Activated B cell treated with CpG ODN at 0.5 μM for 24 hours (primary cell): ENCODE measurements at regions of chr1 and their contacts with region 1.

Region 1: GRCh38 chr1:201170533-201171062 is 16.3 kb upstream of the TMEM9 start:
- DNase-seq: peak; percentile 63
- ATAC-seq: peak; percentile 99
- H3K4me3 Mint-ChIP-seq: peak overlapping the region; percentile 88
- H3K27ac Mint-ChIP-seq: peak overlapping the region; percentile 79
- H3K4me1 Mint-ChIP-seq: peaks cover 12% of the 10 kb centered on the region
- H3K27me3 Mint-ChIP-seq: peaks cover 4% of the 10 kb centered on the region
- CTCF ChIP-seq: no peak

Region 2: DNA sequence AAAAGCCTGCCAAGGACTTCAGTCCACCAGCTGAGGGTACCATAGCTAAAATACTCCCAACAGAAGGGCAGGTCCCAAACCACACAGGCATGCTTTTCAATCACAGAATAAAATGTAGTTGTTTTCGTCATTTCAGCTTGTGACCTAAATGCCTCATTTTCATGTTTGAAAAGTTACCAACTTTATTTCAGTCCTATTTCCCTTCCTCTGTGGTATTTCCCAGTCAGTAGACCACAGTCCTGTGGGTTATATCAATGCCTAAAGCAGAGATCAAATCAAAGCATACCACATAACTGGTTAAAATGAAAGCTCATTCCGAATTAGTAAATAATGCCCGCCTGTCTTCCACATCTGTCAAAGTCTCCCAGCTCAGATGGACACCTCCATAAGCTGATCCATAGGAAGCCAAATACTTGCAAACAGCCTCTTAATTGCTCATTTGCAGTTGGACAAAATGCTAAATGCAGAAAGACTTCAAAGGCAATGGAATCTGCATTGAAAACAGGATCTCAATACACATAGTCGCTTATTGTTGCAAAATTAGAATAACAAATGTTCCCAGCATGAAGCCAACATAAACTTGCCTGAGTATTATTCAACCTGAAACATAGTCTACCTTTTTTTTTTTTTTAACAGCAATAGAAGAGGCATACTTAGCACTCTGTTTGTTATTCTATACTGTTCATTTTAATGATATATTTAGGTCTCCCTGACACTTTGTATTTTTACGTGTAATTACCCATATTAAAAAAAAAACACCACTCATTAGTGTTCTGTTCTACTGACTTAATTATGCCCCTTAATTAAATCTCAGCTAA is 1089.2 kb before region 1 on chr1:
- CTCF ChIA-PET with region 1: no interaction called
- POLR2A ChIA-PET with region 1: no interaction called
- intact Hi-C with region 1: no loop called
- DNase-seq: no peak
- ATAC-seq: no peak
- H3K4me3 Mint-ChIP-seq: no peak overlapping the region
- H3K27ac Mint-ChIP-seq: no peak overlapping the region
- H3K4me1 Mint-ChIP-seq: no peaks in the 10 kb centered on the region
- H3K27me3 Mint-ChIP-seq: peaks cover 17% of the 10 kb centered on the region
- CTCF ChIP-seq: no peak

Region 3: GRCh38 chr1:201154389-201155165 is 16.0 kb before region 1 on chr1 and contains the start of gene TMEM9:
- CTCF ChIA-PET with region 1: interaction called, 4 read pairs
- POLR2A ChIA-PET with region 1: interaction called, 15 read pairs
- intact Hi-C with region 1: loop called (anchors 1 kb)
- DNase-seq: peak; percentile 98
- ATAC-seq: peak; percentile 98
- H3K4me3 Mint-ChIP-seq: peak within 1 kb of the TSS; percentile 92
- H3K27ac Mint-ChIP-seq: peak within 1 kb of the TSS; percentile 89
- H3K4me1 Mint-ChIP-seq: peaks cover 16% of the 10 kb centered on the region
- H3K27me3 Mint-ChIP-seq: peaks cover 5% of the 10 kb centered on the region
- CTCF ChIP-seq: no peak
- total RNA-seq, gene TMEM9: 19.0 and 21.7 TPM in 2 replicates

Region 4: GRCh38 chr1:201184307-201185122 is 13.9 kb after region 1 on chr1:
- CTCF ChIA-PET with region 1: no interaction called
- POLR2A ChIA-PET with region 1: no interaction called
- intact Hi-C with region 1: no loop called
- DNase-seq: no peak
- ATAC-seq: no peak
- H3K4me3 Mint-ChIP-seq: no peak overlapping the region
- H3K27ac Mint-ChIP-seq: no peak overlapping the region
- H3K4me1 Mint-ChIP-seq: no peaks in the 10 kb centered on the region
- H3K27me3 Mint-ChIP-seq: peaks cover 22% of the 10 kb centered on the region
- CTCF ChIP-seq: no peak